ENCODE measurements at regions of chr4 and their contacts with region 1.

Region 1: GRCh38 chr4:152408514-152409327 is 127.2 kb downstream of the FBXW7 start:
- DNase-seq: no peak
- ATAC-seq: peak; percentile 86
- H3K4me3 ChIP-seq: no peak overlapping the region
- H3K27ac ChIP-seq: no peak overlapping the region
- H3K4me1 ChIP-seq: no peaks in the 10 kb centered on the region
- H3K27me3 ChIP-seq: no peaks in the 10 kb centered on the region
- CTCF ChIP-seq: peak; percentile 53 to 58 (median 58); a peak in 5 of 6 replicates
- EP300 ChIP-seq: no peak
- POLR2A ChIP-seq: no peak
- RAD21 ChIP-seq: peak; percentile 72

Region 2: GRCh38 chr4:152398060-152398459 is 10.7 kb before region 1 on chr4:
- CTCF ChIA-PET with region 1: interaction called, 18 read pairs
- POLR2A ChIA-PET with region 1: no interaction called
- RAD21 ChIA-PET with region 1: no interaction called
- SMC1A ChIA-PET with region 1: interaction called, 14 read pairs
- in situ Hi-C with region 1: no loop called
- intact Hi-C with region 1: no loop called
- DNase-seq: no peak
- ATAC-seq: 0 out of 3 replicates have a peak, but pooled peaks have one; percentile 33
- H3K4me3 ChIP-seq: no peak overlapping the region
- H3K27ac ChIP-seq: no peak overlapping the region
- H3K4me1 ChIP-seq: peaks cover 3% of the 10 kb centered on the region
- H3K27me3 ChIP-seq: no peaks in the 10 kb centered on the region
- CTCF ChIP-seq: peak; percentile 1 to 28 (median 13); a peak in 1 of 6 replicates
- EP300 ChIP-seq: no peak
- POLR2A ChIP-seq: no peak
- RAD21 ChIP-seq: peak; percentile 38; the same call in 1 of the 2 replicates

Region 3: DNA sequence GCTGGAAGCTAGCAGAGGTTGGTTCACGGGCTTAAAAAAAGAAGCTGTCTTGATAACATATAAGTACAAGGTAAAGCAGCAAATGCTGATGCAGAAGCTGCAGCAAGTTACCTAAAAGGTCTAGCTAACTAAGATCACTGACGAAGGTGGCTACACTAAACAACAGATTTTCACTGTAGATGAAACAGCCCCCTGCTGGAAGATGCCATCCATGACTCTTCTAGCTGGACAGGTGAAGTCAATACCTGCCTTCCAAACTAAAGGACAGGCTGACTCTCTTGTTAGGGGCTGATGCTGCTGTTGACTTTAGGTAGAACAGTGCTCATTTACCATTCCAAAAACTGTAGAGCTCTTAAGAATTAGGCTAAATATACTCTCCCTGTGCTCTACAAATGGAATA is 27.7 kb after region 1 on chr4:
- CTCF ChIA-PET with region 1: interaction called, 13 read pairs
- POLR2A ChIA-PET with region 1: interaction called, 4 read pairs
- RAD21 ChIA-PET with region 1: no interaction called
- SMC1A ChIA-PET with region 1: interaction called, 7 read pairs
- in situ Hi-C with region 1: no loop called
- intact Hi-C with region 1: no loop called
- DNase-seq: no peak
- ATAC-seq: peak; percentile 43
- H3K4me3 ChIP-seq: no peak overlapping the region
- H3K27ac ChIP-seq: no peak overlapping the region
- H3K4me1 ChIP-seq: peaks cover 4% of the 10 kb centered on the region; the same call in 1 of the 2 replicates
- H3K27me3 ChIP-seq: no peaks in the 10 kb centered on the region
- CTCF ChIP-seq: peak in 2 of 3 experiments; percentile 17 to 29; a peak in 1 of 6 replicates
- EP300 ChIP-seq: no peak
- POLR2A ChIP-seq: no peak
- RAD21 ChIP-seq: no peak

Region 4: DNA sequence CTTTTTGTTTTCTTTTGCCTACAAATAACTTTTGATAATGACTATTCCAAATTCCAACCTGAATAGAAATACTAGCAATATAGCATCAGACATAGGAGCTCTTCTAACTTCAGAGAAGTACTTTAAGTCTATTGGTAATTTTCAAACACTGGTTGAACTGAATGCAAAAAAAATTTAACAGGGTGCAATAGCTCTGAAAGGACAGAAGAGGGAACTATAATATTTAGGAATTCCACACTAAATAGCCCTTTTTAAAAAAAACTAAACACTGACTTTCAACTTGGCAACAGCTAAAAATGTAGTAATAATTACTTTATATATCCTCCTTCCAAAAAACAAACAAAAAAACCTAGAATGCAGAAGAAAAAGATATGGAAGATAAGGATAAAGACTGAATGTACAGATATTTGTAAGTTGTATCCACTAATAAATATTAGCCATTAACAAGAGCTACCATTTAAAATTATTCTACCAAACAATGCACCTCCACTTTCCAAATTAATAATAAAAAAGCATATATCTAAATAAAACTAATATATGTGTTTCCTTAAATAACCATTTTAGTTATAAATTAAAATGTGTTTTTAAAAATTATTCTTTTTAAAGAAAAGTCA is 45.8 kb after region 1 on chr4:
- CTCF ChIA-PET with region 1: interaction called, 20 read pairs
- POLR2A ChIA-PET with region 1: no interaction called
- RAD21 ChIA-PET with region 1: interaction called, 8 read pairs
- SMC1A ChIA-PET with region 1: interaction called, 9 read pairs
- in situ Hi-C with region 1: no loop called
- intact Hi-C with region 1: no loop called
- DNase-seq: no peak
- ATAC-seq: peak; percentile 15; the same call in 2 of the 3 replicates
- H3K4me3 ChIP-seq: no peak overlapping the region
- H3K27ac ChIP-seq: no peak overlapping the region
- H3K4me1 ChIP-seq: peaks cover 12% of the 10 kb centered on the region
- H3K27me3 ChIP-seq: no peaks in the 10 kb centered on the region
- CTCF ChIP-seq: peak; percentile 50 to 60 (median 60)
- EP300 ChIP-seq: no peak
- POLR2A ChIP-seq: no peak
- RAD21 ChIP-seq: peak; percentile 65

Region 5: DNA sequence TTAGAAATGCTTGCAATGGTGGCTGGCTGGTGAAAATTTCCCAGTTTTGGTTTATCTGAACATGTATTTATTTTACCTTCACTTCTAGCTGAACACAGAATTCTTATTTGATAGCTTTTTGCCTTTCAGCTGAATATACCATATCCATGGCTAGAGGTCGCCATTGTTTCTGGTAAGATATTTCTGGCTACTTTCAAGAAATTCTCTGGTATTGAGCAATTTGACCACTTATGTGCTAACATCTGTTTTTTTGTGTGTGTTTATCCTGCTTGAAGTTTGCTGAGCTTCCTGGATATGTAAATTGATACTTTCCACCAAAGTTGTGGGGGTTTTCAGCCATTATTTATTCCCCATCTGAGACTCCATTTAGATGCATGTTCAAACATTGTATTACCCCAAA is 51.8 kb after region 1 on chr4:
- CTCF ChIA-PET with region 1: interaction called, 13 read pairs
- POLR2A ChIA-PET with region 1: no interaction called
- RAD21 ChIA-PET with region 1: interaction called, 8 read pairs
- SMC1A ChIA-PET with region 1: interaction called, 9 read pairs
- in situ Hi-C with region 1: no loop called
- intact Hi-C with region 1: no loop called
- DNase-seq: peak; percentile 43
- ATAC-seq: peak; percentile 32
- H3K4me3 ChIP-seq: no peak overlapping the region
- H3K27ac ChIP-seq: peak overlapping the region; percentile 73
- H3K4me1 ChIP-seq: peaks cover 54% of the 10 kb centered on the region
- H3K27me3 ChIP-seq: no peaks in the 10 kb centered on the region
- CTCF ChIP-seq: peak; percentile 9 to 57 (median 38); a peak in 4 of 6 replicates
- EP300 ChIP-seq: no peak
- POLR2A ChIP-seq: no peak
- RAD21 ChIP-seq: peak; percentile 68